HCT116 (cell line): ENCODE measurements at regions of chr4 and their contacts with region 1.

Region 1: DNA sequence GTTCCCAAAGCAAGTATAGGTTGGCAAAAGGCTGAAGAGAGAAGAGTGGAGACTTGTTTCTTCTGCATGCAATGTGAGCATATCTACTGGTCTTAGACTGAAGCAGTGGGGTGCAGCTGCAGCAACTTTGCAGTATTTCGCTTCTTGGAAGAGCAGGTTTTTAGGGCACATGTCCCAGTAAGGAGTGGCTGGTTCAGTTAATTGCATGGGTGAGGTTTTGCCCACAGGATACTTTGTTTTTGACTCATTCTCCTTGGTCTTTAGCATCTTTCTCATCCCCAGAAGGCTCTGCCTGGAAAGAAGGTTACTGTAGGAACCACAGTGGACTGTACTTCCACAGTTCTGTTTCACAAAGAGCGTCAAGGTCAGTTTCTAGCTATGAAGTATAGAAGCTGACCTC is 68.0 kb upstream of the NR3C2 start:
- DNase-seq: no peak
- ATAC-seq: no peak
- H3K4me3 ChIP-seq: no peak overlapping the region
- H3K27ac ChIP-seq: no peak overlapping the region
- H3K4me1 ChIP-seq: peaks cover 0 to 15% of the 10 kb centered on the region in 2 experiments; a peak in 2 of 4 replicates
- H3K27me3 ChIP-seq: no peaks in the 10 kb centered on the region
- CTCF ChIP-seq: no peak
- POLR2A ChIP-seq: no peak
- RAD21 ChIP-seq: no peak

Region 2: DNA sequence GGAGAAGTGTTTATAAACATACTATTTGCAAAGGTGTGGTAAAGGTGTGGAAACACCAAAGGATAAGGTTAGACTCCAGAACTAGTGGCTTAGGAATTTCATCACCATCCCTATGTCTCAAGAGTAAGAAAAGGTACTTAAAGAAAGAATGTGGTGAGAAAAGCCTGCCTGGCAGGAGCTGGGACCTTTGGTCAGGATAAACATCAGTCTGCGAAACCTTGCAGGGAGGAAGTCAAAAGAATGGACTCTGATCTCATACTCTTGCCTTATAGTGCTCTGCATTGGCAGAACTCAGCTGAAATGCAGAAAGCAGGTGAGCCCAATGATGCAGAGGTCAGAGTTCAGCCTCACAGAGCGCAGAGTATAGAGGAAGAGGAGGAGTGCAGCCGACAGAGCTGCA is 29.2 kb after region 1 on chr4:
- CTCF ChIA-PET with region 1: no interaction called
- POLR2A ChIA-PET with region 1: no interaction called
- RAD21 ChIA-PET with region 1: no interaction called
- intact Hi-C with region 1: loop called (anchors 1 kb)
- DNase-seq: no peak
- ATAC-seq: no peak
- H3K4me3 ChIP-seq: no peak overlapping the region
- H3K27ac ChIP-seq: no peak overlapping the region
- H3K4me1 ChIP-seq: no peaks in the 10 kb centered on the region
- H3K27me3 ChIP-seq: no peaks in the 10 kb centered on the region
- CTCF ChIP-seq: no peak
- POLR2A ChIP-seq: no peak
- RAD21 ChIP-seq: no peak

Region 3: GRCh38 chr4:148557793-148558192 is 47.6 kb after region 1 on chr4:
- CTCF ChIA-PET with region 1: no interaction called
- POLR2A ChIA-PET with region 1: no interaction called
- RAD21 ChIA-PET with region 1: no interaction called
- intact Hi-C with region 1: no loop called
- DNase-seq: no peak
- ATAC-seq: no peak
- H3K4me3 ChIP-seq: no peak overlapping the region
- H3K27ac ChIP-seq: no peak overlapping the region
- H3K4me1 ChIP-seq: no peaks in the 10 kb centered on the region
- H3K27me3 ChIP-seq: no peaks in the 10 kb centered on the region
- CTCF ChIP-seq: no peak
- POLR2A ChIP-seq: no peak
- RAD21 ChIP-seq: no peak

Region 4: DNA sequence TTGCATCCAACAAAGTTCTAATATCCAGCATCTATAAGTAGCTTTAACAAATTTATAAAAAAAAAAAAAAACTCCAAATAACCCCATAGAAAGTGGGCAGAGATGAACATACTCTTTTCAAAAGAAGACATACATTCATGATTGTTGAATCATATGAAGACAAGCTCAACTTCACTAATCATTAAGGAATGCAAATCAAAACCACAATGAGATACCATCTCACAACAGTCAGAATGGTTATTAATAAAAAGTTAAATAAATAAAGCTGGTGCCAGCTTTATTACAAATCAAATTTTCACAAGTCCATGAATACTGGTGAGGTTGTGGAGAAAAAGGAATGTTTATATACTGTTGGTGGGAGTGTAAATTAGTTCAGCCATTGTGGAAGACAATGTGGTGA is 713.4 kb after region 1 on chr4:
- CTCF ChIA-PET with region 1: no interaction called
- POLR2A ChIA-PET with region 1: no interaction called
- RAD21 ChIA-PET with region 1: no interaction called
- intact Hi-C with region 1: no loop called
- DNase-seq: no peak
- ATAC-seq: no peak
- H3K4me3 ChIP-seq: no peak overlapping the region
- H3K27ac ChIP-seq: no peak overlapping the region
- H3K4me1 ChIP-seq: no peaks in the 10 kb centered on the region
- H3K27me3 ChIP-seq: no peaks in the 10 kb centered on the region
- CTCF ChIP-seq: no peak
- POLR2A ChIP-seq: no peak
- RAD21 ChIP-seq: no peak